ENCODE measurements at regions of chr17 and their contacts with region 1.

Region 1: DNA sequence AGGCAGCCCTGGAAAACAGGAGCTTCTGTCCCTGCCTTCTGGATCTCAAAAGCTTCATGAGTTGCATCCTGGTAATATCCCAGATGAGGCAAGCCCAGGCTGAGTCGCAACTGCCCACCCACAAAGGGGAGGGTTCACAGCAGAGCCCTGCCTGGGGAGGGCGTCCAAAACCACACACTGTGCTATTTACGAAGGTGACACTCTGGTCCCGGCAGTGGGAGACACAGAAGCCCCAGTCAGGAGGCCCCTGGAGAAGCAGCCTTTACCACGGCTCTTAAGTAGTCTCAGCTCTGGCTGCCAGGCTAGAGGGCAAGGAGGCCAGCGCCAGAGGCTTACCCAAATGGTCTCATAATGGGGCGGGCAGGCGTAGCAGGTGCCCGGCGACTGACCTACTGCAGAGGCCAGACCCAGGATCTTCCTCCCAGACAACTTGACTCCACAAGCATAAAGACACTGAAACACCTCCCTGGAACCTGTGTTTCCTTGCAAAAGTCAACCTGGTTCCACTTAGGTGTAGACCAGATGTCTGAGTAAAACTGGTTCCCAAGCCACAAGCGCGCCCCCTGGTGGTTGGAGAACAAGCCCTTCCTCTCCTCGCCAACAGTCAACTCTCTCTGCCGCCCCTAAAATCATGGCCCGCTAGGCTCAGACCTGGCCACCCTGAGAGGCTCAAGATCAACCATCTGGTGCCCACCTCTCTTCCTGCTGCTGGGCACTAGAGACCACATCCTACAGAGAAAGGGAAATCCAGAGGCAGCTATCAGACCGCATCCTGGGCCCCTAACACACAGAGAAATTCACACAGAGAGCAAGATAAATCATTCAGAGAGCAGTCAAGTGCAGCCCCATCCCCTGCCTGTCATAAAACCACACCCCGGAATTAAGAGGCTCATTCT is 5.2 kb downstream of the AXIN2 start:
- DNase-seq: peak; percentile 80
- H3K4me3 Mint-ChIP-seq: no peak overlapping the region
- H3K27ac Mint-ChIP-seq: no peak overlapping the region
- H3K4me1 Mint-ChIP-seq: peaks cover 28% of the 10 kb centered on the region
- H3K27me3 Mint-ChIP-seq: peaks cover 16% of the 10 kb centered on the region

Region 2: DNA sequence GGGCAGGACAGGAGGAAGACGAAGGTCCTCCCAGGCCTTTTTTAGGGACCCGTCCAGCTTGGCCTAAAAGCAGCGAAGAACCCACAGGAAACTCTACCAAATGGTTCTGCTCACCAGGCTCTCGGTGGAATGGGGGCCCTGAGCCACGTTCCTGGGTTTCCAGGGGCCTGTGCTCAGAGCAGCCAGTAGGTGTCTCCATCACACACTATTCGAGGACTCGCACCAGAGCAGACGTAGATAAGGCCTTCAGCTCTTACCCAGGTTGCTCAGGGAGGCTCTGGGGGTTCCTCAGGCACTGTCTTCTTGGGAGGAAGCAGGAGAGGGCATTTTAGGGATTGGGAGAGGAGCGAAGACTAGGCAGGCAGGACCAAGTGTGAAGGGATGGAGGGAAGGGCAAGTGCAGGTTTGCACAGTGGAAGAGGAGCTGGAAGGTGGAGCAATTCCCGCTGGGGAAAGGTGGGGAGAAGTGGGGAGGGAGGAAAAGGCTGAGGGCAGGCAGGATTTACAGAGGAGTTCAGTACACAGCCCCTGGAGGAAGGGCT is 262.0 kb before region 1 on chr17:
- intact Hi-C with region 1: loop called (anchors 1 kb)
- DNase-seq: peak; percentile 46
- H3K4me3 Mint-ChIP-seq: no peak overlapping the region
- H3K27ac Mint-ChIP-seq: no peak overlapping the region
- H3K4me1 Mint-ChIP-seq: peaks cover 5% of the 10 kb centered on the region
- H3K27me3 Mint-ChIP-seq: peaks cover 14% of the 10 kb centered on the region

Region 3: GRCh38 chr17:65455972-65456343 is 100.3 kb before region 1 on chr17:
- intact Hi-C with region 1: loop called (anchors 10 kb)
- DNase-seq: no peak
- H3K4me3 Mint-ChIP-seq: no peak overlapping the region
- H3K27ac Mint-ChIP-seq: no peak overlapping the region
- H3K4me1 Mint-ChIP-seq: no peaks in the 10 kb centered on the region
- H3K27me3 Mint-ChIP-seq: peaks cover 10% of the 10 kb centered on the region

Region 4: GRCh38 chr17:65514082-65514481 is 42.2 kb before region 1 on chr17:
- intact Hi-C with region 1: loop called (anchors 2 kb)
- DNase-seq: no peak
- H3K4me3 Mint-ChIP-seq: no peak overlapping the region
- H3K27ac Mint-ChIP-seq: peak overlapping the region; percentile 18
- H3K4me1 Mint-ChIP-seq: peaks cover 10% of the 10 kb centered on the region
- H3K27me3 Mint-ChIP-seq: peaks cover 33% of the 10 kb centered on the region

Region 5: GRCh38 chr17:65523853-65524664 is 32.2 kb before region 1 on chr17:
- intact Hi-C with region 1: loop called (anchors 1 kb)
- DNase-seq: no peak
- H3K4me3 Mint-ChIP-seq: peak overlapping the region; percentile 53
- H3K27ac Mint-ChIP-seq: peak overlapping the region; percentile 79
- H3K4me1 Mint-ChIP-seq: peaks cover 24% of the 10 kb centered on the region
- H3K27me3 Mint-ChIP-seq: peaks cover 32% of the 10 kb centered on the region

Region 6: GRCh38 chr17:65794572-65794971 is 238.3 kb after region 1 on chr17:
- intact Hi-C with region 1: loop called (anchors 10 kb)
- DNase-seq: no peak
- H3K4me3 Mint-ChIP-seq: no peak overlapping the region
- H3K27ac Mint-ChIP-seq: no peak overlapping the region
- H3K4me1 Mint-ChIP-seq: peaks cover 10% of the 10 kb centered on the region
- H3K27me3 Mint-ChIP-seq: no peaks in the 10 kb centered on the region

Region 7: DNA sequence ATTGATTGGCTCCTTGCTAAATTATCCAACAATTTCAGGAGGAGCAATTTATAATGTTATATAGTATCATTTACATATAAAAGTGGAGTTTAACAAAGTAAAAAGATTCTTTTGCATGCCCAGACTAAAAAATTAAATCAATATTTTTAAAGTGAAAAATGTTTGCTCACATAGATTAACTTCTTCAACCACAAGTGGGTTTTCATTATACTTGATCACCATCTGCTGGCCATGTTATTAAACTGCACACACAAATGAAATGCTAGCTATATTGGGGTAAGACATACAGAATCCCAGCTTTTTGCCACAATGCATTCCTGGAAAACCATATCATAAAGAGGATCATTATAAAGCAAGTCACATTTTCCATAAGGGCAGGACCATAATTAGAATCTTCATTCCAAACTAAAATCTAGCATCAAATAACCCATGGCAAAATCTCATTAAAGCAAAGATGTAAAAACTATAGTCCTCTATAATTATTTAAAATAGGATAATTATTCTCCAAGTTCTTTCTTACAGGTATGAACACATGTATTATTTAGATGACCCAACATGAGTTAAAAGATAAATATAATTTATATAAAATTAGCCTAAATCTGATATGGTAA is 609.4 kb after region 1 on chr17:
- intact Hi-C with region 1: loop called (anchors 10 kb)
- DNase-seq: no peak
- H3K4me3 Mint-ChIP-seq: no peak overlapping the region
- H3K27ac Mint-ChIP-seq: no peak overlapping the region
- H3K4me1 Mint-ChIP-seq: peaks cover 2% of the 10 kb centered on the region
- H3K27me3 Mint-ChIP-seq: peaks cover 9% of the 10 kb centered on the region

Measured in activated T-helper 2 cell treated with anti-CD3 and anti-CD28 coated beads, Interferon-gamma antibody, Interleukin-2, Interleukin-4, amounts not matched to agents 10 μg/mL and 5 μg/mL and 100 μg/mL, durations not matched to agents 14 hours and 24 hours and 36 hours (primary cell).